Activated CD4-positive, alpha-beta T cell treated with anti-CD3 and anti-CD28 coated beads for 36 hours (primary cell): ENCODE measurements at regions of chr5 and their contacts with region 1.

Region 1: DNA sequence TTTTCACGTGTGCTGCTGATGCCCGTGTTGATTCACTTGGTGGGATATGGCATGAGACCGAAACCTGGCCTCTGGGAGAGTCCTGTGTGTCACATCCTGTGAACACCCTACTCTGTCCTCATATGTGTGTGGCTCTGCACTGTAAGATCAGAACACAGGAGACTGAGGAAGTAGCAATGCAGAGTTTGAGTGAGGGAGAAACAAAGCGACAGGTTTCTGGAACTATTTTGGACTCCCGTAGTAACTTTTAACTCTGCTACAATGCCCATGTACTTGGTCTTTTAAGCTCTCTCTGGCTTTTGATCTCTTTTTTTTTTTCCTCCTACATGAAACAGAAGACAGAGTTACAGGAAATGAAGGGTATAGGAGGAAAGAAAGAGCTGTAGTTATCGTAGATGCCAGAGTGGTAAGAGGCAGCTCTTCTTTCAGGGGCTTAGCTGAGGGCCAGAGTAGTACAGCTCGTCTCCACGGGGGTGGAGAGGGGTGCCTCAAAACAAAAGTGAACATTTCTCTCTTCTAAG is 26.6 kb downstream of the GRAMD2B start:
- DNase-seq: peak; percentile 82
- ATAC-seq: peak; percentile 86
- H3K4me3 Mint-ChIP-seq: peak overlapping the region; percentile 79
- H3K27ac Mint-ChIP-seq: peak overlapping the region; percentile 100
- H3K4me1 Mint-ChIP-seq: peaks cover 82% of the 10 kb centered on the region
- H3K27me3 Mint-ChIP-seq: no peaks in the 10 kb centered on the region

Region 2: DNA sequence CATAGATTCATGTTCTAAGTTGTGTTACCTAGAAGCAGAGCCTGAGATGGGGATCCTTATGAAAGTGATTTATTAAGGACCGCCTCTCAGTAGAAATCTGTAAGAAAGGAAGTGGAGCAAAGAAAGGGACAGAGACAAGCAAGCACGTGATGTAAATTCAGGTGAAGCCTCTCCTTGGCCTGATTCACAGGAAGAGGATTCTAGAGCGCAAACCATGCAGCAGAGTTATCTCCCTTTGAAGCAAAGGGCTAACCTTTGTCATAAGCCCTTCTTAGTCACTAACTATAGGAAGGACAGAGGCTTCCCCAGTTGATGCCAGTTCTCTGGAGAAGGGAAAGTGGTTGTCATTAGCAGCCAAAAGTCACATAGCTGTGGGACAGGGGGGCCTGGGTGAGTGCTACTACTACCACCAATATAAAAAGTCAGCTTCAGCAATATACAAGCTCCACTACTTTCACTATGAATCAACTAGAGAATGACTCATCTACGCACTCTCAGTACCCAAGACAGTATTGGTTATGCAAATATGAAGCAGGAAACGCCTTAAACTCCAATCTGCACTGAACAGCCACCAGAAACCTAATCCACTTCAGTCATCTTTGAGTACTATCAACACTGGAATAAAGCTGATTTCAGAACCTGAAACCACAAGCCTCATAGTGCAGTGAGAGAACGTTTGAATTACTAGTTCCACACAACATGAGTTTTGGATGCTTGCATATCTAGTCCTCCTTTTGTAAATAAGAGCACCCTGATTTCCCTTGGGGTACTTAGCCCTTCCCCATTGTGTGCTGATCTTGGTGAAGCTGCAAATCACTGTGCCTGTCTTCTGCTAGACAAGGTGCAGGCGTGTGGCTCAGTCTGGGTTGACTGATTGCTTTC is 1866.1 kb before region 1 on chr5:
- CTCF ChIA-PET with region 1: no interaction called
- POLR2A ChIA-PET with region 1: no interaction called
- intact Hi-C with region 1: loop called in 1 of 2 experiments (anchors 10 kb)
- DNase-seq: peak; percentile 47
- ATAC-seq: peak; percentile 95
- H3K4me3 Mint-ChIP-seq: no peak overlapping the region
- H3K27ac Mint-ChIP-seq: no peak overlapping the region
- H3K4me1 Mint-ChIP-seq: peaks cover 23% of the 10 kb centered on the region
- H3K27me3 Mint-ChIP-seq: peaks cover 5% of the 10 kb centered on the region

Region 3: DNA sequence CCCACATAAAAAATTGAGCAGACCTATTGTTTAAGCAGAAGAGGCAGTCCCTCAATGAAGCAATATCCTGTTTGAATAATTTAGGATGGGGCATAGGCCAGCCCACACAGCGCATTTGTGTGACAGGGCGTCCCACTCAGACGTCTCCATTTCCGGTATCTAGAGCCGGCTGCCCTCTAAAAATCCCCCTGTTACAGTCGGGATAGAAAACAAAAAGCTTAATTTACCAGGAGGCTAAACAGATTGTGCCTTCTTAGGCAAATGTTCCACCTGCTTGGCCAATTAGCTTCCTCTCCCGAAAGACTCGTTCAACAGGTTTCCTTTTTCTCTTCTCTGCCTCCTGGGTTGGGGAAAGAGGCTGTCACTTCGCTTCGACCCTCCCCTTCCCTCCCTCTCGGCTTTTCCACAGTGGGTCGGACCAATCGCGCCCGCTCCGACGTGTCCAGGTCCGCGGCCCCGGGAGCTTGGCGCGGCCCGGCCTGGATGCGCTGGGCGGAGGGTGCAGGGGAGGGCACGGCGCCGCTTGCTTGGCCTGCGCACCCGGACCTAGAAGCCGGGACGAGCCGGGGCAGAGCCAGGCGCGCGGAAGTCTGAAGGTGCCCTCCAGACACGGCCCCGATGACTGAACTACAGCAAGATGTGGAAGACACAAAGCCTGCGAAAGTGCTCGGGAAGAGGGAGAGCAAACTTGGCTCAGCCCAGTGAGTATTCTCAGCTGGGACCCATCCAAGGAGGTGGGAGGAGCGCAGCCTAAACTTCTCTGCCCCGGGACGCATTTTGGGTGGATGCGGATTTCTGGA is 26.6 kb before region 1 on chr5 and contains the start of gene GRAMD2B:
- CTCF ChIA-PET with region 1: interaction called, 15 read pairs
- POLR2A ChIA-PET with region 1: interaction called, 24 read pairs
- intact Hi-C with region 1: loop called (anchors 1 kb)
- DNase-seq: peak; percentile 82
- ATAC-seq: peak; percentile 86
- H3K4me3 Mint-ChIP-seq: peak within 1 kb of the TSS; percentile 87
- H3K27ac Mint-ChIP-seq: peak within 1 kb of the TSS; percentile 90
- H3K4me1 Mint-ChIP-seq: peaks cover 40% of the 10 kb centered on the region
- H3K27me3 Mint-ChIP-seq: no peaks in the 10 kb centered on the region
- total RNA-seq, gene GRAMD2B: 9.7 to 13.9 TPM

Region 4: GRCh38 chr5:126471875-126472537 is 22.2 kb after region 1 on chr5:
- CTCF ChIA-PET with region 1: interaction called, 5 read pairs
- POLR2A ChIA-PET with region 1: interaction called, 3 read pairs
- intact Hi-C with region 1: loop called in 1 of 2 experiments (anchors 2 kb)
- DNase-seq: no peak
- ATAC-seq: peak; percentile 49
- H3K4me3 Mint-ChIP-seq: no peak overlapping the region
- H3K27ac Mint-ChIP-seq: peak overlapping the region; percentile 56
- H3K4me1 Mint-ChIP-seq: peaks cover 8% of the 10 kb centered on the region
- H3K27me3 Mint-ChIP-seq: no peaks in the 10 kb centered on the region

Region 5: GRCh38 chr5:126508962-126509279 is 59.1 kb after region 1 on chr5:
- CTCF ChIA-PET with region 1: no interaction called
- POLR2A ChIA-PET with region 1: no interaction called
- intact Hi-C with region 1: loop called (anchors 2 to 5 kb)
- DNase-seq: no peak
- ATAC-seq: peak; percentile 89
- H3K4me3 Mint-ChIP-seq: peak overlapping the region; percentile 50
- H3K27ac Mint-ChIP-seq: peak overlapping the region; percentile 81
- H3K4me1 Mint-ChIP-seq: peaks cover 37% of the 10 kb centered on the region
- H3K27me3 Mint-ChIP-seq: no peaks in the 10 kb centered on the region

Region 6: GRCh38 chr5:126624534-126624933 is 174.7 kb after region 1 on chr5:
- CTCF ChIA-PET with region 1: no interaction called
- POLR2A ChIA-PET with region 1: no interaction called
- intact Hi-C with region 1: no loop called
- DNase-seq: peak; percentile 35
- ATAC-seq: peak; percentile 88
- H3K4me3 Mint-ChIP-seq: no peak overlapping the region
- H3K27ac Mint-ChIP-seq: peak overlapping the region; percentile 84
- H3K4me1 Mint-ChIP-seq: peaks cover 13% of the 10 kb centered on the region
- H3K27me3 Mint-ChIP-seq: no peaks in the 10 kb centered on the region

Region 7: DNA sequence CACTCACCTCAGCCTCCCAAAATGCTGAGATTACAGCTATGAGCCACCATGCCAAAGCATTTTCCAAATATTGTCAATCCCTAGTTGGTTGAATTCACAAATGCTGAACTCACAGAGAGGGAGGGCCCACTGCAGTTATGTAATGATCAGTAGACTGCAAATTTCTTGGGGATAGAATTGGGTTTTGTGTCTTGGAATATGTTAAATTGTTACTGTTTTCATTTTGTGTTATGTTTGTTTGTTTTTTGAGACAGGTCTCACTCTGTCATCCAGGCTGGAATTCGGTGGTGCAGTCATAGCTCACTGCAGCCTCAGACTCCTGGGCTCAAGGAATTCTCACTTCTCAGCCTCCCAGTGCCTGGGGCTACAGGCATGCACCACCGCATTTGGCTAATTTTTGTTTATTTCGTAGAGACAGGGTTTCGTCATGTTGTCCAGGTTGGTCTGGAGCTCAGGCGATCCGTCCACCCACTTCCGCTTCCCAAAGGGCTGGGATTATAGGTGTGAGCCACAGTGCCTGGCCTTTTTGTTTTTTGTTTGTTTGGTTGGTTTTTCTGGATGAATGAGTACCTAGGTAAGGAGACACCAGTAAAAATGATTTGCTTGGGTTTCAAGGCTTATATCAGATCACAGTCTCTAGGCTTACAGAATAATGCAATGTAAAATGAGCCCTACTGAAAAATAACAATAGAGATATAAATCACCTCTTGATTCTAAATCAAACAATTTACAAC is 295.6 kb after region 1 on chr5:
- CTCF ChIA-PET with region 1: no interaction called
- POLR2A ChIA-PET with region 1: no interaction called
- intact Hi-C with region 1: loop called in 1 of 2 experiments (anchors 1 kb)
- DNase-seq: no peak
- ATAC-seq: no peak
- H3K4me3 Mint-ChIP-seq: no peak overlapping the region
- H3K27ac Mint-ChIP-seq: no peak overlapping the region
- H3K4me1 Mint-ChIP-seq: peaks cover 34% of the 10 kb centered on the region
- H3K27me3 Mint-ChIP-seq: peaks cover 3% of the 10 kb centered on the region

Region 8: GRCh38 chr5:126808521-126808988 is 358.7 kb after region 1 on chr5:
- CTCF ChIA-PET with region 1: no interaction called
- POLR2A ChIA-PET with region 1: no interaction called
- intact Hi-C with region 1: loop called in 1 of 2 experiments (anchors 2 kb)
- DNase-seq: no peak
- ATAC-seq: no peak
- H3K4me3 Mint-ChIP-seq: no peak overlapping the region
- H3K27ac Mint-ChIP-seq: no peak overlapping the region
- H3K4me1 Mint-ChIP-seq: peaks cover 51% of the 10 kb centered on the region
- H3K27me3 Mint-ChIP-seq: no peaks in the 10 kb centered on the region